Activated T-helper 2 cell treated with anti-CD3 and anti-CD28 coated beads, Interferon-gamma antibody, Interleukin-2, Interleukin-4, amounts not matched to agents 10 μg/mL and 5 μg/mL and 100 μg/mL, durations not matched to agents 14 hours and 24 hours and 36 hours (primary cell): ENCODE measurements at regions of chrX and their contacts with region 1.

Region 1: GRCh38 chrX:79182616-79183015 is 38.1 kb downstream of the GPR174 start:
- DNase-seq: no peak
- H3K4me3 Mint-ChIP-seq: peak overlapping the region; percentile 0
- H3K27ac Mint-ChIP-seq: peak overlapping the region; percentile 91
- H3K4me1 Mint-ChIP-seq: peaks cover 38% of the 10 kb centered on the region
- H3K27me3 Mint-ChIP-seq: no peaks in the 10 kb centered on the region

Region 2: DNA sequence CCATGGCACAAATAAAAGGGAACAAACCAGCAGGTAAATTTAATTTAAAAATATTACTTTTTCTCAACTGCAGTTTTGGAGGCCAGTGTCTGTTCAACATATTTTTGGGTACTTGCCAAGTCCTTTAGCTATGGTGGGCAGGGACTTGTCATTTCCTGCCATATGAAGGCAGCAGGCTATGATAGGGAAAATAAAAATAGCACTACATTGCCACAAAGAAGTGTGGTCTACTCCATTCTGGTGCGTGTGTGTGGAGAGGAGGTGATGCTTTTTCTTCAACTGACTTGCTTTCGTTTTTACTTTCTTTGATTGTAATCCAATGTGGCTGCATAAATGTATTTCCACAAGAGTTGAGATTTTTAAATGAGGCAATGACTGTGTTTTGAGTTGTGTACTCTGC is 21.0 kb before region 1 on chrX:
- intact Hi-C with region 1: loop called (anchors 1 kb)
- DNase-seq: peak; percentile 43
- H3K4me3 Mint-ChIP-seq: peak overlapping the region; percentile 89
- H3K27ac Mint-ChIP-seq: peak overlapping the region; percentile 99
- H3K4me1 Mint-ChIP-seq: peaks cover 54% of the 10 kb centered on the region
- H3K27me3 Mint-ChIP-seq: no peaks in the 10 kb centered on the region

Region 3: DNA sequence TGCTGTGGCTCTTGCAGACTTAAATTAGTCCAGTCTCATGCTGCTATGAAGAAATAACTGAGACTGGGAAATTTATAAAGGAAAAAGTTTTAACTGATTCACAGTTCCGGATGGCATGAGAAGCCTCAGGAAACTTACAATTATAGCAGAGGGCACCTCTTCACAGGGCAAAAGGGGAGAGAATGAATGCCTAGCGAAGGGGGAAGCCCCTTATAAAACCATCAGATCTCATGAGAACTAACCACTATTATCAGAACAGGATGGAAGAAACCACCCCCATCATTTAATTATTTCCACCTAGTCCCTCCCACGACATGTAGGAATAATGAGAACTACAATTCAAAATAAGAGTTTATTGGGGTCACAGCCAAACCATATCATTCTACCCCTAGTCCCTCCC is 53.3 kb after region 1 on chrX:
- intact Hi-C with region 1: no loop called
- DNase-seq: no peak
- H3K4me3 Mint-ChIP-seq: no peak overlapping the region
- H3K27ac Mint-ChIP-seq: no peak overlapping the region
- H3K4me1 Mint-ChIP-seq: peaks cover 2% of the 10 kb centered on the region
- H3K27me3 Mint-ChIP-seq: no peaks in the 10 kb centered on the region